Naive thymus-derived CD4-positive, alpha-beta T cell (primary cell): ENCODE measurements at regions of chr11 and their contacts with region 1.

Region 1: DNA sequence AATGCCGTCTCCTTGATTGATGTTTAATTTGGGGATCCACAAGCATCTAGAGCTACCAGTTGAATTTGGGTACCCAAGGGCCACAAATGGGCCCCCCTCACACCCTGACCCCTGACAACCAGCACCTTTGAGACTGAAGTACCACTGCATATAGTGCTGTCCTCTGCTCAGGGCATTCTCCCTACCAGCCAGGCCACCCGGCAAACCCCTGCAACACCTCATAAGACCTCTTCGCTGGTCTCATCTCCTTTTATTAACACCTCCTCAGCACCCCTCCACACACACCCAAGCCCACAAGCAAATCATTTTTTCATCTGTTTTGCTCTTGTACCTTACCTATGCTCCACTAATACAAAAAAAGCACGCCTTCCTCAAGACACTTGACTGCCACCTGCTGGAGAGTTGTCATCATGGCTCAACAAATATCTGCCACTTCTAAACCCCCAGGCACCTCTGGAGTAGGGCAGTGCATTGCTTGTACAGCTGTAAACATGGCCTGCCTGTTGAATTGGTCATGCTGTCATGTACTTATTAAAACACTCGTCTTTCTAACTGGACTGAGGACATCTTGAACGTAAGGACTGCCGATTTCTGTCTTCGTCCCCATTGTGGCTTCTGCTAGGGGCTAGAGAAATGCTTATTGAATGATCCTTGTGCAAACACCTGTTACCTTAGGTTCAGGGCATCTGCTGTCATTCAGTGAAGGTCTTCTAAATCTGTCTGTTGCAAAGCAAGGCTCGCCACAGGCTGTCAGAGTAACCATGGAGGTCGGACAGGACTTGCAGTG is 66.5 kb downstream of the BMAL1 start:
- DNase-seq: peak; percentile 42 to 68 (median 62)
- ATAC-seq: peak; percentile 79
- H3K4me3 ChIP-seq: no peak overlapping the region
- H3K4me3 Mint-ChIP-seq: no peak overlapping the region
- H3K27ac ChIP-seq: no peak overlapping the region
- H3K27ac Mint-ChIP-seq: peak overlapping the region in 6 of 9 donors; percentile 2 to 25 (median 10)
- H3K4me1 ChIP-seq: peaks cover 12 to 15% of the 10 kb centered on the region in 2 donors
- H3K4me1 Mint-ChIP-seq: peaks cover 41 to 82% (median 65%) of the 10 kb centered on the region in 7 donors
- H3K27me3 ChIP-seq: no peaks in the 10 kb centered on the region
- H3K27me3 Mint-ChIP-seq: no peaks in the 10 kb centered on the region

Region 2: GRCh38 chr11:12963792-12964536 is 380.2 kb before region 1 on chr11:
- CTCF ChIA-PET with region 1: interaction called, 13 read pairs
- POLR2A ChIA-PET with region 1: no interaction called
- intact Hi-C with region 1: loop called (anchors 1 kb)
- DNase-seq: peak; percentile 13 to 59 (median 39)
- ATAC-seq: peak; percentile 76
- H3K4me3 ChIP-seq: no peak overlapping the region
- H3K4me3 Mint-ChIP-seq: peak overlapping the region in 1 of 10 donors; percentile 5
- H3K27ac ChIP-seq: no peak overlapping the region
- H3K27ac Mint-ChIP-seq: no peak overlapping the region
- H3K4me1 ChIP-seq: no peaks in the 10 kb centered on the region
- H3K4me1 Mint-ChIP-seq: no peaks in the 10 kb centered on the region
- H3K27me3 ChIP-seq: no peaks in the 10 kb centered on the region
- H3K27me3 Mint-ChIP-seq: peaks cover 17 to 37% (median 30%) of the 10 kb centered on the region in 5 donors

Region 3: GRCh38 chr11:13135385-13136271 is 208.5 kb before region 1 on chr11:
- CTCF ChIA-PET with region 1: no interaction called
- POLR2A ChIA-PET with region 1: no interaction called
- intact Hi-C with region 1: no loop called
- DNase-seq: no peak
- ATAC-seq: no peak
- H3K4me3 ChIP-seq: no peak overlapping the region
- H3K4me3 Mint-ChIP-seq: no peak overlapping the region
- H3K27ac ChIP-seq: no peak overlapping the region
- H3K27ac Mint-ChIP-seq: no peak overlapping the region
- H3K4me1 ChIP-seq: no peaks in the 10 kb centered on the region
- H3K4me1 Mint-ChIP-seq: no peaks in the 10 kb centered on the region
- H3K27me3 ChIP-seq: no peaks in the 10 kb centered on the region
- H3K27me3 Mint-ChIP-seq: peaks cover 18 to 48% (median 35%) of the 10 kb centered on the region in 5 donors

Region 4: GRCh38 chr11:13210424-13210823 is 133.7 kb before region 1 on chr11:
- CTCF ChIA-PET with region 1: interaction called, 5 read pairs
- POLR2A ChIA-PET with region 1: no interaction called
- intact Hi-C with region 1: loop called (anchors 1 kb)
- DNase-seq: peak in 3 of 9 donors; percentile 7 to 9 (median 8)
- ATAC-seq: no peak
- H3K4me3 ChIP-seq: no peak overlapping the region
- H3K4me3 Mint-ChIP-seq: no peak overlapping the region
- H3K27ac ChIP-seq: no peak overlapping the region
- H3K27ac Mint-ChIP-seq: peak overlapping the region in 1 of 9 donors; percentile 32
- H3K4me1 ChIP-seq: peaks cover 0 to 6% of the 10 kb centered on the region in 2 donors
- H3K4me1 Mint-ChIP-seq: peaks cover 16 to 33% (median 23%) of the 10 kb centered on the region in 7 donors
- H3K27me3 ChIP-seq: no peaks in the 10 kb centered on the region
- H3K27me3 Mint-ChIP-seq: peaks cover 0 to 3% (median 0%) of the 10 kb centered on the region in 5 donors

Region 5: DNA sequence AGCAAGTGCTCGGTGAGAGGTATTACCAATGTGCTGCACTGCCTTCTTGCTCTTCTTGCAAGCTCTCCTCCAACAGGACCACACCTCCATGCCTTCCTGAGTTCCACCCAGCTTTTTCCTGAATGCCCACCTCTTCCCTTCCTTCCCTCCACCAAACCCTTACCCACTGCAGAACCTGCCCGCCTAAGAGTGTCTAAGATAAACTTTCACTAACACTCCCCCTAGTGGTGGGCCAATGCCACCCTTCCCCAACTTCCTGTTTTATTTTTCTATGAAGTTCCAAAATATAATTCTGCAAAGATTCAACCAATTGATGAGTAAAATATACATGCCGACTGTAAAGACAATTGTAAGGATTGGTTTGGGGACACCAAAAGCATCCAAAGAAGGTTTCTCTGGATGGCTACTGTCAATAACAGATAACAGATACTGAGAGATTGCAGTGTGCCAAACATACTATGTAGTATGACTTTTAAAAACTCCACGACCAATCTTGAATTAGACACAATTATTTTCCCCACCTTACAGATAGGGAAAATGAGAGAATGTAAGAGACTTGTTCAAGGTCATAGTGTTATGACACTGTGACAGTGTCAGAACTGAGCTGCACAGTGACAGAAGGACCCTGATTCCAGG is 105.1 kb before region 1 on chr11:
- CTCF ChIA-PET with region 1: no interaction called
- POLR2A ChIA-PET with region 1: no interaction called
- intact Hi-C with region 1: loop called in 1 of 2 experiments (anchors 1 kb)
- DNase-seq: peak; percentile 11 to 59 (median 43)
- ATAC-seq: peak; percentile 84
- H3K4me3 ChIP-seq: no peak overlapping the region
- H3K4me3 Mint-ChIP-seq: no peak overlapping the region
- H3K27ac ChIP-seq: no peak overlapping the region
- H3K27ac Mint-ChIP-seq: no peak overlapping the region
- H3K4me1 ChIP-seq: no peaks in the 10 kb centered on the region
- H3K4me1 Mint-ChIP-seq: peaks cover 0 to 5% (median 0%) of the 10 kb centered on the region in 7 donors
- H3K27me3 ChIP-seq: no peaks in the 10 kb centered on the region
- H3K27me3 Mint-ChIP-seq: peaks cover 0 to 45% (median 15%) of the 10 kb centered on the region in 5 donors

Region 6: GRCh38 chr11:13249996-13250395 is 94.1 kb before region 1 on chr11:
- CTCF ChIA-PET with region 1: interaction called, 6 read pairs
- POLR2A ChIA-PET with region 1: no interaction called
- intact Hi-C with region 1: loop called (anchors 1 kb)
- DNase-seq: no peak
- ATAC-seq: no peak
- H3K4me3 ChIP-seq: no peak overlapping the region
- H3K4me3 Mint-ChIP-seq: no peak overlapping the region
- H3K27ac ChIP-seq: no peak overlapping the region
- H3K27ac Mint-ChIP-seq: no peak overlapping the region
- H3K4me1 ChIP-seq: no peaks in the 10 kb centered on the region
- H3K4me1 Mint-ChIP-seq: no peaks in the 10 kb centered on the region
- H3K27me3 ChIP-seq: peaks cover 0 to 9% of the 10 kb centered on the region in 2 donors
- H3K27me3 Mint-ChIP-seq: peaks cover 7 to 22% (median 14%) of the 10 kb centered on the region in 5 donors

Region 7: GRCh38 chr11:13440100-13440855 is 96.2 kb after region 1 on chr11:
- CTCF ChIA-PET with region 1: no interaction called
- POLR2A ChIA-PET with region 1: no interaction called
- intact Hi-C with region 1: no loop called
- DNase-seq: no peak
- ATAC-seq: no peak
- H3K4me3 ChIP-seq: no peak overlapping the region
- H3K4me3 Mint-ChIP-seq: no peak overlapping the region
- H3K27ac ChIP-seq: no peak overlapping the region
- H3K27ac Mint-ChIP-seq: peak overlapping the region in 1 of 9 donors; percentile 10
- H3K4me1 ChIP-seq: peaks cover 0 to 3% of the 10 kb centered on the region in 2 donors
- H3K4me1 Mint-ChIP-seq: peaks cover 4 to 71% (median 56%) of the 10 kb centered on the region in 7 donors
- H3K27me3 ChIP-seq: no peaks in the 10 kb centered on the region
- H3K27me3 Mint-ChIP-seq: no peaks in the 10 kb centered on the region

Region 8: GRCh38 chr11:13535819-13536218 is 191.7 kb after region 1 on chr11:
- CTCF ChIA-PET with region 1: no interaction called
- POLR2A ChIA-PET with region 1: no interaction called
- intact Hi-C with region 1: no loop called
- DNase-seq: no peak
- ATAC-seq: no peak
- H3K4me3 ChIP-seq: no peak overlapping the region
- H3K4me3 Mint-ChIP-seq: no peak overlapping the region
- H3K27ac ChIP-seq: no peak overlapping the region
- H3K27ac Mint-ChIP-seq: no peak overlapping the region
- H3K4me1 ChIP-seq: no peaks in the 10 kb centered on the region
- H3K4me1 Mint-ChIP-seq: no peaks in the 10 kb centered on the region
- H3K27me3 ChIP-seq: no peaks in the 10 kb centered on the region
- H3K27me3 Mint-ChIP-seq: peaks cover 0 to 27% (median 10%) of the 10 kb centered on the region in 5 donors